Activated T-helper 1 cell treated with anti-CD3 and anti-CD28 coated beads, Interleukin-12 subunit alpha, Interleukin-12 subunit beta, Interleukin-2, Interleukin-4 antibody, amounts not matched to agents 30 ng/mL and 10 ng/mL and 1 ng/mL, durations not matched to agents 14 hours and 24 hours and 36 hours (primary cell): ENCODE measurements at regions of chr6 and their contacts with region 1.

Region 1: GRCh38 chr6:73854998-73855718 is 159.2 kb downstream of the CD109 start:
- DNase-seq: no peak
- H3K4me3 Mint-ChIP-seq: no peak overlapping the region
- H3K27ac Mint-ChIP-seq: no peak overlapping the region
- H3K4me1 Mint-ChIP-seq: no peaks in the 10 kb centered on the region
- H3K27me3 Mint-ChIP-seq: no peaks in the 10 kb centered on the region

Region 2: GRCh38 chr6:73675466-73676098 is 179.6 kb before region 1 on chr6:
- intact Hi-C with region 1: loop called (anchors 10 kb)
- DNase-seq: peak; percentile 57
- H3K4me3 Mint-ChIP-seq: no peak overlapping the region
- H3K27ac Mint-ChIP-seq: no peak overlapping the region
- H3K4me1 Mint-ChIP-seq: peaks cover 6% of the 10 kb centered on the region
- H3K27me3 Mint-ChIP-seq: peaks cover 16% of the 10 kb centered on the region

Region 3: DNA sequence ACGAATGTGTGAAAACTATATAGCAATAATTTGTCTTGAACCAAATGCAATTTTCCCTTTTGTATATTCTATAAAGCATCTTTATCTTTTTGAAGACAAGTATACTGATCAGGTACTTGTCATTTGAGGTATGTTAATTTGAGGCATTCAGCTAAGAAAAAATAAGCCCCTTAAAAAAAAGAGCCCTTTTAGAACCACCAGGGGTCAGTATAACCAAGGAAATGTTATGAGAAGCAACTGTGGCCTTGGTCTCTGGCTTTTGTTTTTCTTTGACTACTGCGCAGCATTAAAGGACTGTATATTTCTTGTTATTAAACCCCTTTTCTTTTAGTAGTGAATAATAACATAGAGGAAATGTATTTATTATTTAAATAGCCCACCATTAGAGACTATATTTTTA is 116.1 kb before region 1 on chr6:
- intact Hi-C with region 1: loop called (anchors 1 kb)
- DNase-seq: no peak
- H3K4me3 Mint-ChIP-seq: no peak overlapping the region
- H3K27ac Mint-ChIP-seq: no peak overlapping the region
- H3K4me1 Mint-ChIP-seq: peaks cover 13% of the 10 kb centered on the region
- H3K27me3 Mint-ChIP-seq: no peaks in the 10 kb centered on the region

Region 4: GRCh38 chr6:73823046-73823735 is 32.0 kb before region 1 on chr6:
- intact Hi-C with region 1: no loop called
- DNase-seq: no peak
- H3K4me3 Mint-ChIP-seq: no peak overlapping the region
- H3K27ac Mint-ChIP-seq: no peak overlapping the region
- H3K4me1 Mint-ChIP-seq: no peaks in the 10 kb centered on the region
- H3K27me3 Mint-ChIP-seq: no peaks in the 10 kb centered on the region

Region 5: GRCh38 chr6:73929421-73929820 is 74.3 kb after region 1 on chr6:
- intact Hi-C with region 1: no loop called
- DNase-seq: no peak
- H3K4me3 Mint-ChIP-seq: no peak overlapping the region
- H3K27ac Mint-ChIP-seq: no peak overlapping the region
- H3K4me1 Mint-ChIP-seq: no peaks in the 10 kb centered on the region
- H3K27me3 Mint-ChIP-seq: no peaks in the 10 kb centered on the region

Region 6: DNA sequence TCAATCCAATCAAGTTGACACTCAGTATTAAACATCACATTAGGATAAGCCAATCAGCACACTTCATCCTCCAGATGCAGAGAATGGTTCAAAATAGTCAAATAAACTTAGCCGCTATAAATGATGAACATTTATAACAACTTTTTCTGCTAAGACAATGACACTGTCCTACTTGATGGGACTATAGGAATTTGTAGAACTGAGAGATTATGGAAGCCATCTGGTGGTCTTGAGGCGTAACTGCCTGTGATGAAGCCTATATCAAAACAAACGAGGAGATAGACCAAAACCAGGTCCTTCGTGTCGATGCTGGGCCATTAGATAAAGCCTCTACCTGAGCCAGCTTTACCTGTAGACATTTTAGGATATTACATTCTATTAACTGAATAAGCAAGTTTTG is 719.6 kb after region 1 on chr6:
- intact Hi-C with region 1: loop called (anchors 5 kb)
- DNase-seq: no peak
- H3K4me3 Mint-ChIP-seq: no peak overlapping the region
- H3K27ac Mint-ChIP-seq: no peak overlapping the region
- H3K4me1 Mint-ChIP-seq: no peaks in the 10 kb centered on the region
- H3K27me3 Mint-ChIP-seq: no peaks in the 10 kb centered on the region